ENCODE measurements at regions of chr16 and their contacts with region 1.

Region 1: DNA sequence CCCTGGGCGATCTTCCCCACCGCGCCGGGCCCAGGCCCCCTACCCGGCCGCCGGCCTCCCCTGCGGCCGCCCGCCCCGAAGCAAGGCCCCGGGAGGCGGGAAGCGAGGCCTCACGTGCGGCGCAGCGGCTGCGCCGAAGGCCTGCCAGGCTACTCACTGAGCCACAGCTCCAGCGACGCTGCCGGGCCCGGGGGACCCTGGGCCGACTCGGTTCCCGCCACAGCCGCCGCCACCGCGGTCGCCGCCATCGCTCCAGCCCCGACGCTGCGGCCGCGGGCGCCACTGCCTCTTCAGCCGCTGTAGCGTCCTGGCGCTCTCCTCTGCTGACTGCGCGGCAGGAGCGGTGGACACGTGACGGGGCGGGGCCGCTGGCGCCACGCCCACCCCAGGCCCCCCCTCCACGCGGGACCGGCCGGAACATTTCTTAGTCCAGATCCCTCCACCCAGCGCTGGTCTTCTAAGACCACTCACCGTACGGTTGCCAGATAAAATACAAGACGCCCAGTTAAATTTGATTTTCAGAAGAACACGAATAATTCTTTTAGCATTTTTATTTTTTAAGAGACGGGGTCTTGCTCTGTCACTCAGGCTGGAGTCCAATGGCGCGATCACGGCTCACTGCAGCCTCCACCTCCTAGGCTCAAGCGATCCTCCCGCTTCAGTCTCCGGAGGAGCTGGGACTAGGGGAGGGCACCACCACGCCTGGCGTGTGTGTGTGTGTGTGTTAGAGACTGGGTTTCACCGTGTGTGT is at the start of gene GGA2:
- DNase-seq: peak; percentile 46 to 78
- H3K4me3 ChIP-seq: peak within 1 kb of the TSS; percentile 69
- H3K27ac ChIP-seq: no peak within 1 kb of the TSS
- H3K4me1 ChIP-seq: peaks cover 15% of the 10 kb centered on the region
- H3K27me3 ChIP-seq: no peaks in the 10 kb centered on the region
- CTCF ChIP-seq: no peak
- total RNA-seq, gene GGA2: 68.5 and 85.1 TPM in 2 replicates

Region 2: DNA sequence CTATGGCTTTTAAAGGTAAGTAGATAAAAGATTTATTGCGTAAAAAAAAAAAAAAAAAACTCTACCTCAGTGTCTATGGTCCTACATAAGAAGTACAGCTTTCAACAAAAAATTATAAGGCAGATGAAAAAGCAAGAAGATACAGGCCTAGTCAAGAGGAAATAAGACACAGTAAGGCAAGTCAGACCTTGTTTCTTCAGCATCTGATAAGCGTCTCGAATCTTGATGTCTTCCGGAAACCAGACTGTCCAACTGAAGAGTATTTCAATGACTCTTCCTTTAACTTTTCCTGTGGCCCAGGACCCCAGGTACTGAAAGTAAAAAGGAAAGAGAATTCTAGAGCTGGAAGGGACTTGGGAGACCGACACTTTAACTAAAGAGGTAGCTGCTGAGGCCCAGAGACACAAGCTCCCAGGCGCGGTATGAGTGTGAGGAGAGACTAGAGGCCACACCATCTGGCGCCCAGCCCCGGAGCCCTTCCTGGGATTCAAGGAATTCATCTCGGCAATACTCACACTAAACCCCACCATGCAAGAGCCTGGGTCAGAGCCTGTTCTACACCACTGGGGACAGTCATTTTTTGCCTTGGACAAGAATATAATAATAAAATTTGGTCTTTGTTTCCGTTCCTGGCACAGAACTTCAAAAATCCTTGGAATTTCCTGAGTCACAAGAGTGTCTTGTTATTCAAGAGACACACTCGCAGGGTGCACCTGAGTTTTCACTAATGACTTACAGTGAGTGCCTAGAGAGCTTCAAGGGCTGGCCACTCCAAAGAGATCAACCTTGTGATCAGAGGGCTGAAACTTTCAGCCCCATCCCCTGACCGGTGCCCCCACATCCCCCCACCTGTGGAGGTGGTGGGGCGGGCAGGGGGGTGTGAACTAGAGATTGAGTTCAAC is 18.6 kb before region 1 on chr16:
- CTCF ChIA-PET with region 1: interaction called, 11 read pairs
- POLR2A ChIA-PET with region 1: interaction called, 4 read pairs
- intact Hi-C with region 1: loop called (anchors 1 kb)
- DNase-seq: peak in 1 of 2 experiments; percentile 70
- H3K4me3 ChIP-seq: no peak overlapping the region
- H3K27ac ChIP-seq: no peak overlapping the region
- H3K4me1 ChIP-seq: no peaks in the 10 kb centered on the region
- H3K27me3 ChIP-seq: no peaks in the 10 kb centered on the region
- CTCF ChIP-seq: no peak

Region 3: GRCh38 chr16:23539984-23540816 is 29.9 kb after region 1 on chr16:
- CTCF ChIA-PET with region 1: no interaction called
- POLR2A ChIA-PET with region 1: interaction called, 12 read pairs
- intact Hi-C with region 1: no loop called
- DNase-seq: no peak
- H3K4me3 ChIP-seq: no peak overlapping the region
- H3K27ac ChIP-seq: peak overlapping the region; percentile 75; the same call in 1 of the 2 replicates
- H3K4me1 ChIP-seq: peaks cover 18% of the 10 kb centered on the region
- H3K27me3 ChIP-seq: no peaks in the 10 kb centered on the region
- CTCF ChIP-seq: no peak

Region 4: DNA sequence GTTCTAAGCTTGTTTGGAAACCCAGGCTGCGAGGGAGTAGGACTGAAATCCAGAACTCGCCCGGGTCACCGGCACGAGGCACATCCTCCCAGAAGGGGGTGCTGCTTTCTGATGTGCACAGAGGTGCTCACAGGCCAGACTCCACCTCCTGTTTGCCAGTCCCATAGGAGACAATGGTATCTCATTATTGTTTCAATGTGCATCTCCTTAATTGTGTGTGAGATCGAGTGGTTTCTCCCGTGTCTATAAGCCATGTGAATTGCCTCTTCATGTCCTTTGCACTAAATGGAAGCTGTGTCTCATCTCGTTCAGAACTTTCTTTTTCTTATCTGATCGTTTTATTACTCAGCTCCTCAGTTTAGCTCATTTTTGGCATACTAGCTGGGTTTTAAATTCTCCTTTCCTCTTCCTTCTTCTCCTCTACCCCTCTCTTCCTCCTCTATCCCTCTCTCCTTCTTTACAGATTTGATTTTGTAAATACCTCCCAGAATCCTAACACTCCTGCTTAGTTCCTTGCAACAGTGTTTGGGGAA is 293.3 kb after region 1 on chr16:
- CTCF ChIA-PET with region 1: no interaction called
- POLR2A ChIA-PET with region 1: no interaction called
- intact Hi-C with region 1: no loop called
- DNase-seq: peak in 1 of 2 experiments; percentile 30
- H3K4me3 ChIP-seq: no peak overlapping the region
- H3K27ac ChIP-seq: no peak overlapping the region
- H3K4me1 ChIP-seq: 0 out of 2 replicates have a peak, but pooled peaks cover 4% of the 10 kb centered on the region
- H3K27me3 ChIP-seq: peaks cover 56% of the 10 kb centered on the region
- CTCF ChIP-seq: peak; percentile 41; the same call in 1 of the 2 replicates

Region 5: DNA sequence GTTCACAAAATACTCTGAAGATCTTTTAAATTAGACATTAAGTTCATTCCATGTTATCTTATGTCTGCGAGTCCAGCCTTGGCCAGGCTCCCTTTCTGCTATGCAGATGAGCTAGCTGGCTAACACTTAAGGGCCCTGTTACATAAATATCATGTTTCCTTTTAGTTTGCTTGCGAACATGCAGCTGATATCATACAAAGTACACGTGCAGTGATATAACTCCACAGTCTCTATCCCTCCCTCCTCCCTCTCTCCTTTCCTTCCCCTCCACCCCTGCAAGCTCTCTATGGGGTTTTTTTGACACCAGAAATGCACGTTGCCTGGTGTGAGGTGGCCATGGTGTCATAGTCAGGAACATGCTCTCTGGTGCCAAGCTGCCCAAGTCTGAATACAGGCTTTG is 1458.7 kb after region 1 on chr16:
- CTCF ChIA-PET with region 1: interaction called, 15 read pairs
- POLR2A ChIA-PET with region 1: no interaction called
- intact Hi-C with region 1: no loop called
- DNase-seq: no peak
- H3K4me3 ChIP-seq: no peak overlapping the region
- H3K27ac ChIP-seq: no peak overlapping the region
- H3K4me1 ChIP-seq: no peaks in the 10 kb centered on the region
- H3K27me3 ChIP-seq: no peaks in the 10 kb centered on the region
- CTCF ChIP-seq: no peak

Measured in PC-9 (cell line).